CD4-positive, alpha-beta memory T cell (primary cell): ENCODE measurements at regions of chr3 and their contacts with region 1.

Region 1: GRCh38 chr3:36957862-36958686 is 13.2 kb upstream of the TRANK1 start:
- DNase-seq: no peak
- H3K4me3 ChIP-seq: no peak overlapping the region
- H3K4me3 Mint-ChIP-seq: peak overlapping the region in 5 of 8 donors; percentile 4 to 65 (median 40)
- H3K27ac ChIP-seq: no peak overlapping the region
- H3K27ac Mint-ChIP-seq: peak overlapping the region; percentile 61 to 85 (median 77)
- H3K4me1 ChIP-seq: peaks cover 9% of the 10 kb centered on the region
- H3K4me1 Mint-ChIP-seq: peaks cover 10 to 12% (median 11%) of the 10 kb centered on the region in 4 donors
- H3K27me3 ChIP-seq: no peaks in the 10 kb centered on the region
- H3K27me3 Mint-ChIP-seq: no peaks in the 10 kb centered on the region

Region 2: GRCh38 chr3:36792342-36792741 is 165.7 kb before region 1 on chr3:
- CTCF ChIA-PET with region 1: interaction called, 8 read pairs
- POLR2A ChIA-PET with region 1: interaction called, 3 read pairs
- intact Hi-C with region 1: loop called (anchors 1 kb)
- DNase-seq: peak in 1 of 5 donors; percentile 4
- H3K4me3 ChIP-seq: no peak overlapping the region
- H3K4me3 Mint-ChIP-seq: no peak overlapping the region
- H3K27ac ChIP-seq: no peak overlapping the region
- H3K27ac Mint-ChIP-seq: no peak overlapping the region
- H3K4me1 ChIP-seq: no peaks in the 10 kb centered on the region
- H3K4me1 Mint-ChIP-seq: no peaks in the 10 kb centered on the region
- H3K27me3 ChIP-seq: no peaks in the 10 kb centered on the region
- H3K27me3 Mint-ChIP-seq: peaks cover 0 to 1% of the 10 kb centered on the region in 2 donors

Region 3: DNA sequence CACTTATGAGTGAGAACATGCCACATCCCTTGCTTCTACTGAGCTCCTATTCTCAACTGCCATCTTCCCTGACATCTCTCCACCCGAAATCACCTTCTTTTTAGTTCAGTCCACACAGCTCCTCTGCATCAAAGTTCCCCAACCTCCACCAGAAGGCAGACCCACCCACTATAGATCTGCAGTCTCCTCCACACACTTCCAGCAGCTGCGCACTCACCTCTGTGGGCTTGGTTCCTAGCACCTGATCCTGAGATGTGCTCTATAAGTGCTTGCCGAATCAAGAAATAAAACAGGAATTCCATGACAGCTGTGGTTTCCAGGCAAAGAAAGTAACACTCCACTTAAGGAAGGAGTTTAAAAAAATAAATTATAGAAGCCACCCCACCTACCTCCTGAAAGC is 98.6 kb before region 1 on chr3:
- CTCF ChIA-PET with region 1: interaction called, 19 read pairs
- POLR2A ChIA-PET with region 1: interaction called, 4 read pairs
- intact Hi-C with region 1: no loop called
- DNase-seq: no peak
- H3K4me3 ChIP-seq: no peak overlapping the region
- H3K4me3 Mint-ChIP-seq: no peak overlapping the region
- H3K27ac ChIP-seq: no peak overlapping the region
- H3K27ac Mint-ChIP-seq: peak overlapping the region in 2 of 7 donors; percentile 72 to 87
- H3K4me1 ChIP-seq: peaks cover 8% of the 10 kb centered on the region
- H3K4me1 Mint-ChIP-seq: peaks cover 7 to 19% (median 18%) of the 10 kb centered on the region in 4 donors
- H3K27me3 ChIP-seq: no peaks in the 10 kb centered on the region
- H3K27me3 Mint-ChIP-seq: no peaks in the 10 kb centered on the region

Region 4: DNA sequence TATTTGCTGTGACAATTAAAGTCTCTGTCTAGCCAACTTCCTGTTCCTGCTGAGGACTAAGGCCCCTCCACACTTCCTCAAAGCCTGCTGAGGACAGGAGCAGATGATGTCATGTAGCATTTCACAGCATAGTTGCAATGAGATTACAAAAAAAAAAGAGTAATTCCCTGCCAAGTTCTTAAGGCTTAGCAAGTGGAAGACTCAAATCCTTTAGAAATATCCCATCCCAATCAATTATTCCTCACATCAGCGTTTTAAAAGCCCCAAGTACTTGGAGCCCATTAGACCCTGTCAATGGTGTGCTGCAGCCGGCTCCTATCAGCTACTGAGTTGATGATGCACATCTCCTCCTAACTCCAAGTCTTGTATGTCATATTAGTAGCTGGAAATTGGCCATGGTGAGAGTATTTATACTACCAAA is 64.9 kb before region 1 on chr3:
- CTCF ChIA-PET with region 1: interaction called, 25 read pairs
- POLR2A ChIA-PET with region 1: interaction called, 4 read pairs
- intact Hi-C with region 1: no loop called
- DNase-seq: peak; percentile 40 to 85 (median 56)
- H3K4me3 ChIP-seq: no peak overlapping the region
- H3K4me3 Mint-ChIP-seq: peak overlapping the region in 4 of 8 donors; percentile 1 to 65 (median 56)
- H3K27ac ChIP-seq: peak overlapping the region; percentile 43
- H3K27ac Mint-ChIP-seq: peak overlapping the region; percentile 79 to 97 (median 93)
- H3K4me1 ChIP-seq: peaks cover 46% of the 10 kb centered on the region
- H3K4me1 Mint-ChIP-seq: peaks cover 40 to 74% (median 55%) of the 10 kb centered on the region in 4 donors
- H3K27me3 ChIP-seq: no peaks in the 10 kb centered on the region
- H3K27me3 Mint-ChIP-seq: no peaks in the 10 kb centered on the region

Region 5: DNA sequence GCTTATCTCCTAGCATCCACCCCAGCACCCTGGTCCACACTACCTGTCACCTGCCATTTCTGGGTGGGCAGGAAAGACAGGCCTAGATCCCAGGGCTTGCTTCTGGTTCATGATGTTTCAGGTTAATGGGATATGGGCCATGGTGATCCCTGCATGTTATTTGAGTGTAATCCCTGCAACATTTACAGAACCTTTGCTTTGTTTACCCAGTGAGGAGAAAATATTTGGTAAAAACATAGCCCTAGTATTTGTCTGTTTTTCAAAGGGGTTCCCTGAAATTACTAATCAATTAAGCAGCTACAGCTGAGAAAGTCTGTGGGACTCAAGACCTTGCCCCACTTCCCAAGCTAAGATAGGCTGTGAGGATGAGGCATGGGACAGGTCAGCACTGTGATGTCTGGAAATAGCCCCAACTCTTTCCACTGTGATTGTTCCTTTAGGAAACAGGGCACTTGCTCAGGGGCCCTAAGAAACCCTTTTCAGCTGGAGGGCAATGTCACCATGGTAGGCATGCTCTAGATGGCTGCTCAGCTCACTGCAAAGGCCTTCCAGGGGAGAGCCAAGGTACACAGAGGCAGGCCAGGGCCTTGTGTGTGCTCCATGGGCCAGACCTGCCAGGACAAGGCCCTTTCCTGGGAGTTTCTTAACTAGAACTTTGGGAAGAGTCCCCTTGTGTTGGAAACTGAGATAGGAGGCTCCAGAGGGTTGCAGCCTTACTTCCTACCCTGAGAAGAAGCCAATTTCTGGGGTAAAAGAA is 24.4 kb before region 1 on chr3:
- CTCF ChIA-PET with region 1: interaction called, 11 read pairs
- POLR2A ChIA-PET with region 1: interaction called, 3 read pairs
- intact Hi-C with region 1: no loop called
- DNase-seq: no peak
- H3K4me3 ChIP-seq: no peak overlapping the region
- H3K4me3 Mint-ChIP-seq: no peak overlapping the region
- H3K27ac ChIP-seq: no peak overlapping the region
- H3K27ac Mint-ChIP-seq: no peak overlapping the region
- H3K4me1 ChIP-seq: no peaks in the 10 kb centered on the region
- H3K4me1 Mint-ChIP-seq: peaks cover 0 to 10% (median 1%) of the 10 kb centered on the region in 4 donors
- H3K27me3 ChIP-seq: no peaks in the 10 kb centered on the region
- H3K27me3 Mint-ChIP-seq: no peaks in the 10 kb centered on the region

Region 6: DNA sequence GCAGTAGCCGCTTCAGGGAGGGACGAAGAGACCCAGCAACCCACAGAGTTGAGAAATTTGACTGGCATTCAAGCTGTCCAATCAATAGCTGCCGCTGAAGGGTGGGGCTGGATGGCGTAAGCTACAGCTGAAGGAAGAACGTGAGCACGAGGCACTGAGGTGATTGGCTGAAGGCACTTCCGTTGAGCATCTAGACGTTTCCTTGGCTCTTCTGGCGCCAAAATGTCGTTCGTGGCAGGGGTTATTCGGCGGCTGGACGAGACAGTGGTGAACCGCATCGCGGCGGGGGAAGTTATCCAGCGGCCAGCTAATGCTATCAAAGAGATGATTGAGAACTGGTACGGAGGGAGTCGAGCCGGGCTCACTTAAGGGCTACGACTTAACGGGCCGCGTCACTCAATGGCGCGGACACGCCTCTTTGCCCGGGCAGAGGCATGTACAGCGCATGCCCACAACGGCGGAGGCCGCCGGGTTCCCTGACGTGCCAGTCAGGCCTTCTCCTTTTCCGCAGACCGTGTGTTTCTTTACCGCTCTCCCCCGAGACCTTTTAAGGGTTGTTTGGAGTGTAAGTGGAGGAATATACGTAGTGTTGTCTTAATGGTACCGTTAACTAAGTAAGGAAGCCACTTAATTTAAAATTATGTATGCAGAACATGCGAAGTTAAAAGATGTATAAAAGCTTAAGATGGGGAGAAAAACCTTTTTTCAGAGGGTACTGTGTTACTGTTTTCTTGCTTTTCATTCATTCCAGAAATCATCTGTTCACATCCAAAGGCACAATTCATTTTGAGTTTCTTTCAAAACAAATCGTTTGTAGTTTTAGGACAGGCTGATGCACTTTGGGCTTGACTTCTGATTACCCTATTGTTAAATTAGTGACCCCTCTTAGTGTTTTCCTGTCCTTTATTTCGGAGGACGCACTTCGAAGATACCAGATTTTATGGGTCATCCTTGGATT is 35.5 kb after region 1 on chr3 and contains the start of gene MLH1:
- CTCF ChIA-PET with region 1: interaction called, 54 read pairs
- POLR2A ChIA-PET with region 1: interaction called, 7 read pairs
- intact Hi-C with region 1: loop called (anchors 1 kb)
- DNase-seq: peak in 4 of 5 donors; percentile 94 to 96 (median 96)
- H3K4me3 ChIP-seq: peak within 1 kb of the TSS; percentile 64 to 97
- H3K4me3 Mint-ChIP-seq: no peak within 1 kb of the TSS
- H3K27ac ChIP-seq: peak within 1 kb of the TSS; percentile 95
- H3K27ac Mint-ChIP-seq: no peak within 1 kb of the TSS
- H3K4me1 ChIP-seq: peaks cover 45% of the 10 kb centered on the region
- H3K4me1 Mint-ChIP-seq: peaks cover 25 to 38% (median 33%) of the 10 kb centered on the region in 4 donors
- H3K27me3 ChIP-seq: no peaks in the 10 kb centered on the region
- H3K27me3 Mint-ChIP-seq: no peaks in the 10 kb centered on the region
- total RNA-seq, gene MLH1: 30.3 to 33.8 TPM

Region 7: DNA sequence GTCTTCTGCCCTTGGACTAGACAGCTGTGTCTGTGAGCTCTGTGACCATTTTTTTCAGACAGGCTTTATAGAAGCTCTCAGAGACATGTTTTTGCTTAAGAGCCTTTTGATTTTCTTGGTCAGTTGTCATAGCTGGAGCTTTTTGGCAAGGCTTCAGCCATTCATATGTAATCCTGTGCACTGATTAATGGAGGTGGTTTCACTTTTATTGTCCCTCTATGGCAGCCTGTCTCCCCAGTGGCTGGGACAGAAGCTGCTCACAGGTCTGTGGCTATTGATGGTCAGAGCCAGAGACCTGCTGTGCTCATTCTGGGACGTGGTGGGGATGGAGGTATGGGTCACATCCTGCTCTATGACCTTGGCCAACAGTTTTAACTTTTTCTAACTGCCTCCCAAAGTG is 442.9 kb after region 1 on chr3:
- CTCF ChIA-PET with region 1: no interaction called
- POLR2A ChIA-PET with region 1: no interaction called
- intact Hi-C with region 1: no loop called
- DNase-seq: no peak
- H3K4me3 ChIP-seq: no peak overlapping the region
- H3K4me3 Mint-ChIP-seq: no peak overlapping the region
- H3K27ac ChIP-seq: no peak overlapping the region
- H3K27ac Mint-ChIP-seq: no peak overlapping the region
- H3K4me1 ChIP-seq: no peaks in the 10 kb centered on the region
- H3K4me1 Mint-ChIP-seq: peaks cover 0 to 1% (median 0%) of the 10 kb centered on the region in 4 donors
- H3K27me3 ChIP-seq: no peaks in the 10 kb centered on the region
- H3K27me3 Mint-ChIP-seq: no peaks in the 10 kb centered on the region